H1 (cell line): ENCODE measurements at regions of chr1 and their contacts with region 1.

Region 1: DNA sequence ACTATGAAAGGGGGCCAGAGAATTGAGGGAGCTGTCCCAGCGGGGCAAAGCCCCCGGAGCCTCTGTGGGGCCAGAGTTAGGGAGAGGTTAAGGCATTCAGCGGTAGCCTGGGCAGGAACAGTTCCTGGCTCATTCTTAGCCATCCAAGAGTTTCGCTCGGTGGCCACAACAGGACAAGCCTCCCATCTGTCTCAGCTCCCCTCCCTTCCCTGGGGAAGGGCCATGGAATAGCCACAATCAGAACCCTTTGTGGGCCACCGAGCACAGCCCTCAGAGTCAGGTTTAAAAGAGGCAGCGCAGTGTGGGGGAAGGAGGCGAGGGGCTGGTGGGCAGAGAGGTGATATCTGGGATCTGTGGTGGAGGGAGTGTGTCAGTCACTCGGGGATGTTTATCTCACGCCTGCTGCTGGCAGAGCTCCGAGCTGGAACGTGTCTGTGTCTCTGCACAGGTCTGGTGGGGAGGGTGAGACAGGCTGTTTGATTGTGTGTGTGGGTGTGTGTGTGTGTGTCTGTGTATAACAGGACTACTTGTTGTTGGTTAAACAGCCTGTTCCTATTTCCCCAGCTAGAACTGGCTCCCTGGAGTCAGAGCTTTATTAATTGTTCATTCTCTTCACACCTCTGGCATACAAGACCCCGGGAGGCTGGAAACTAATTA is 49.6 kb upstream of the GOLT1A start:
- DNase-seq: no peak
- H3K4me3 ChIP-seq: no peak overlapping the region
- H3K27ac ChIP-seq: no peak overlapping the region
- H3K4me1 ChIP-seq: no peaks in the 10 kb centered on the region
- H3K27me3 ChIP-seq: no peaks in the 10 kb centered on the region
- CTCF ChIP-seq: no peak
- EP300 ChIP-seq: no peak
- POLR2A ChIP-seq: no peak
- RAD21 ChIP-seq: no peak

Region 2: DNA sequence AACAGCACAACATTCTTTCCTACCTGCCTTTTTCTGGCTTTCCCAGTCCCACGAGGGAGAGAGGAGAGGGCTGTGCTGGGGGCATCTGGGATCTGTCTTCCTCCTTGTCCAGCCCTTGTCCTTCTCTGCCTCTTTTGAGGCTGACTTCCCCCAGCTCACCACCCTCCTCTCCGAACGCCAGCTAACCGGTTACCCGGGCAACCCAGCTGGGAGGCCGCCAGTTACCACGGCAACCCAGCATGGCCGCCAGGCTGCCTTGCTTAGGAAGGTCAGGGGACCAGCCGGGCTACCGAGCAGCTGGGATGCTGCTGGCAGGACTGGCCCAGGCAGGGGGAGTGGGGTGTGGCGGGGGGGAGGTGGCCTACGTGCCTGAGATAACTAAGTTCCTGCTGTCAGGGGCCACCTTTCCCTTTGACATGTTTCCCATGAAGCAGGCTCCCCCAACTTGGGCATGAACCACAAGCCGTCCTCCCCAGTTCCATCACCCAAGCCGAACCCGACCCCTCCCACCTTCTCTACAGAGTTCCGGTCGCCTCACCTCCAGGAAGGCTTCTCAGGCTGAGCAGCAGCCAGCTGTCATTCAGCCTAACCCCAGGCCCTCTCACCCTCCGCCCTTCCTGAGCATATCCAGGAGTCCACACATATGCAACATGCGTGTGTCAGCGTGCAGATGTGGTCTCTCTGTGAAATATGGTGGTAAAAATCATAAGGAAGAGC is 87.6 kb after region 1 on chr1:
- CTCF ChIA-PET with region 1: interaction called, 17 read pairs
- POLR2A ChIA-PET with region 1: no interaction called
- DNase-seq: peak in 1 of 2 experiments; percentile 99
- H3K4me3 ChIP-seq: peak overlapping the region in 1 of 4 experiments; percentile 44; a peak in 3 of 8 replicates
- H3K27ac ChIP-seq: no peak overlapping the region
- H3K4me1 ChIP-seq: peaks cover 6 to 18% (median 14%) of the 10 kb centered on the region in 4 experiments
- H3K27me3 ChIP-seq: no peaks in the 10 kb centered on the region
- CTCF ChIP-seq: no peak
- EP300 ChIP-seq: peak in 1 of 2 experiments; percentile 76; a peak in 1 of 3 replicates
- POLR2A ChIP-seq: no peak
- RAD21 ChIP-seq: no peak

Region 3: GRCh38 chr1:204516180-204516879 is 252.9 kb after region 1 on chr1 and contains the start of gene MDM4:
- CTCF ChIA-PET with region 1: no interaction called
- POLR2A ChIA-PET with region 1: no interaction called
- DNase-seq: peak; percentile 90 to 99
- H3K4me3 ChIP-seq: peak within 1 kb of the TSS; percentile 75 to 91 (median 84)
- H3K27ac ChIP-seq: peak within 1 kb of the TSS; percentile 97
- H3K4me1 ChIP-seq: no peaks in the 10 kb centered on the region; a peak in 1 of 7 replicates
- H3K27me3 ChIP-seq: no peaks in the 10 kb centered on the region
- CTCF ChIP-seq: no peak
- EP300 ChIP-seq: peak in 1 of 2 experiments; percentile 68; a peak in 2 of 3 replicates
- POLR2A ChIP-seq: peak in 1 of 2 experiments; percentile 75; a peak in 1 of 3 replicates
- RAD21 ChIP-seq: no peak
- total RNA-seq, gene MDM4: 81.7 and 84.9 TPM in 2 replicates